ENCODE measurements at regions of chr20 and their contacts with region 1.

Region 1: GRCh38 chr20:49620364-49621240 is 52.7 kb upstream of the PTGIS start:
- DNase-seq: no peak

Region 2: GRCh38 chr20:49397525-49397924 is 223.1 kb before region 1 on chr20:
- in situ Hi-C with region 1: loop called (anchors 10 kb)
- DNase-seq: no peak